ENCODE measurements at regions of chr3 and their contacts with region 1.

Region 1: DNA sequence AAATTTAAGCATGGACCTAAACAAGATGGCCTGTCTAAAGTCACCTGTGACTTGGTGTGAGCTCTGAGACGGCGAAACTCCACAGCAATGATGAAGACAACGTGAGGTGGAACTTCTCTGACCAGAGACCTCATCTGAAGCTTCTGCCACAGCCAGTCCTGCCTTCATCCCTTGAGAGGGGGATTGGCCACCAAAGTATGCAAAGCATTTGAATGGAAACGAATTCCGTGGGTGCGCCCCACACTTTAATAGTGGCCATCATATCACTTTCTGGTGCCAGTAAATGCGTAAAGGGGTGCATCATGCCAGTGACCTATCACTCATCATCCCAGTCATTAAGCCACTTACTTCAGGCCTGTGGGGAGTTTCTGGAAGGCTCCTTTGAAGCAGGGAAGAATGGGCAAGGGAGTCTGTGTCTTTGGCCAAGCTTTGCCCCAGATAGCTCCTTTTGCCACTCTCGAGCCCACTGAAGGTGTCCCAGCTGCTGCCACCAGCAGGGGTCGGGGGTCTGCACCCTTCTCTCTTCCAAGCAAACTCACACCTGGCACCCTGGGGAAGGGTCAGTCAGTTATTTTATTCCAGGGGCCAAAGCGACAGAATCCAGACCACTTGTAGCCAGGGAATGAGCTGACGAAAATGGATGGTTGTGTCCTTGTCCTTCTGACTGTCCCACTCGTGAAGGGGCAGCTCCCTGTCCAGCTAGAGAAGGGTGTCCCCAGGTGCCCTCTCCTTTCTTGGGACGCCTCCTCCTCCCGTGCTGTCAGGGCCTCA is 17.7 kb downstream of the MUC20 start:
- DNase-seq: peak; percentile 76

Region 2: DNA sequence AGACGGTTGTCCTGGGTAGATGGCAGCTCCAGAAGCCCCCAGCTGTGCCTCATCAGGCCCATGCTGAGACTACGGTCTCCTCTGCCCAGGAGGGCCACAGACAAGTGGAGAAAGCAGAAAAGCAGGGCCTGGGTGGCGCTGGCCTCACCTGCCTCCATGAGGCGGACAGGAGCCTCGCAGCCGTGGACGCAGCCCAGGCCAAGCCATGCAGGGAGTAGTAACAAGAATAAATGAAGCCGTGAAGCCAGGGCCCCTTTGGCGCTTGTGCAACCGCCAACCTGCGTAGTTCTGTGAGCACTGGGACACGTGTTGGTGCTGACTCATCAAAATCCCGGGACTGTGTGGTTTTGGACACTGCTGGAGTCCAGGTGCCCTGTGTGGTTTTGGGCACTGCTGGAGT is 85.5 kb after region 1 on chr3:
- intact Hi-C with region 1: loop called in 1 of 2 experiments (anchors 1 kb)
- DNase-seq: no peak